ENCODE measurements at regions of chr1 and their contacts with region 1.

Region 1: DNA sequence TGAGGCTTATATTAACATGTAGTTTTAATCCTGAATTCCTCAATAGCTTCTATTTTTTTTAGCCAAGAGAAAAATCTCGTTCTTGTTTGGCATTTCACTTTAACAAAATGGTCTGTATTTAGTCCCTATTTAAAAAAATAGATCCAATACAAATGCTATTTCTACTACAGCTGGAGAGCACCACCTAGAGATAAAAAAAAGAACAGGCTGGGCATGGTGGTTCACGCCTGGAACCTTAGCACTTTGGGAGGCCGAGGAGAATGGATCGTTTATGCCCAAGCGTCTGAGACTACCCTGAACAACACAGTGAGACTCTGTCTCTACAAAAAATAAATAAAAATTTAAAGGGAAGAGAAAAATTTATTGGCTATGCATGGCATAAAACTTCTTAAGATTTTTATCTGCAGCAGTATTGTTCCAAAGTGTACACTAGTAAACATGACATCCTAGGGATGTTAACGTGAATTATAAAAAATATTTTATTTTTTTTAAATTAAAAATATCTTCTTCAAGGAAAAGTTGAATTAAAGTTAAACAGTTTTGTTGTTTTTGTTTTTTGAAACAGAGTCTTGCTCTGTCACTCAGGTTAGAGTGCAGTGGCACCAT is 4.4 kb downstream of the ST7L start:
- DNase-seq: peak in 2 of 9 experiments; percentile 46 to 58
- ATAC-seq: no peak
- H3K4me3 ChIP-seq: no peak overlapping the region
- H3K4me3 Mint-ChIP-seq: no peak overlapping the region
- H3K27ac ChIP-seq: no peak overlapping the region
- H3K27ac Mint-ChIP-seq: no peak overlapping the region
- H3K4me1 ChIP-seq: peaks cover 8% of the 10 kb centered on the region
- H3K4me1 Mint-ChIP-seq: peaks cover 12% of the 10 kb centered on the region
- H3K27me3 ChIP-seq: no peaks in the 10 kb centered on the region
- H3K27me3 Mint-ChIP-seq: no peaks in the 10 kb centered on the region
- CTCF ChIP-seq: peak; percentile 60

Region 2: DNA sequence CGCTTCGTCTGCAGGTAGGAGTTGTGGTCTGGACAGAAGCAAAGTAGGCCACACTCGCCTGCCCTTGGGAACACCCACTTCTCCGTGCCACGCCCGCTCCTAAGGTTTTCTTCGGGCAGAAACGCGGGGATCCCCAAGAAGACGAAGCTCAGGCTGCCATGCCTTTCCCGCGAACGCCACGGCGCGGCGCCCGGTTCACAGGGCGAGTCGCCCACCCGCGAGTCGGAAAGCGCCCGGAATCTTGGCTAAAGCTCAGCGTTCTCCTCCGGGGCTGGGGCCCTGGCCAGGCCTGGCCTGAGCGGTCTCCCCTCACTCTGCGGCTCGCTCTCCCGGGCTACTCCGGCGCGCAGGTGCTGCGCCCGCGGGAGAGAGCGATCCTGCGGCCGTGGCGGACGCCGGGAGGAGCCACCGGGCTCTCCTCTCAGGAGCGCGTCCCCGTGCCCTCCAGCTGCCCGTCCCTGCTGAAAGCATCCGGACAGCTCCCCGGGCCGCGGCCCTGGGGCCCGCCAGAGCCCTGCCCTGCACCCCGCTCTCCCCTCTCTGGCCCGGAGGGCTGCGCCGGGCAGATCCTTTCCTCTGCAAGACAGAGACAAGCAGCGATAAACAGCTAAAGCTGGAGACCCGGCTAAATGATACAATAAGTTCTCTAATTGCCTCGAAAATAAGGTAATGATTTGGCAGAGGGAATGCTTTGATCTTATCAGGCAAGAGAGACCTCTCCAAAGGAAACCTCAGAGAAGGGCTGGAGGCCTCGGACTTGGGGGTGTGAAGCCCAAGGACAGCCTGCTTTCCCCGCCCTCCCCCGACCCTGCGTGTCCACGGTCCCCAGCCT is 112.5 kb before region 1 on chr1:
- CTCF ChIA-PET with region 1: interaction called, 39 read pairs
- POLR2A ChIA-PET with region 1: no interaction called
- intact Hi-C with region 1: loop called (anchors 1 kb)
- DNase-seq: peak; percentile 18 to 73 (median 57)
- ATAC-seq: peak; percentile 80
- H3K4me3 ChIP-seq: peak overlapping the region; percentile 25 to 45
- H3K4me3 Mint-ChIP-seq: peak overlapping the region; percentile 74
- H3K27ac ChIP-seq: no peak overlapping the region
- H3K27ac Mint-ChIP-seq: no peak overlapping the region
- H3K4me1 ChIP-seq: peaks cover 6% of the 10 kb centered on the region
- H3K4me1 Mint-ChIP-seq: peaks cover 6% of the 10 kb centered on the region
- H3K27me3 ChIP-seq: peaks cover 9 to 16% of the 10 kb centered on the region in 2 experiments
- H3K27me3 Mint-ChIP-seq: peaks cover 72% of the 10 kb centered on the region
- CTCF ChIP-seq: peak; percentile 44

Region 3: GRCh38 chr1:112540226-112540794 is 74.3 kb before region 1 on chr1:
- CTCF ChIA-PET with region 1: no interaction called
- POLR2A ChIA-PET with region 1: no interaction called
- intact Hi-C with region 1: no loop called
- DNase-seq: no peak
- ATAC-seq: no peak
- H3K4me3 ChIP-seq: no peak overlapping the region
- H3K4me3 Mint-ChIP-seq: no peak overlapping the region
- H3K27ac ChIP-seq: no peak overlapping the region
- H3K27ac Mint-ChIP-seq: no peak overlapping the region
- H3K4me1 ChIP-seq: no peaks in the 10 kb centered on the region
- H3K4me1 Mint-ChIP-seq: no peaks in the 10 kb centered on the region
- H3K27me3 ChIP-seq: no peaks in the 10 kb centered on the region
- H3K27me3 Mint-ChIP-seq: no peaks in the 10 kb centered on the region
- CTCF ChIP-seq: no peak